RWPE1 (cell line): ENCODE measurements at regions of chr20 and their contacts with region 1.

Region 1: GRCh38 chr20:40962730-40963504 is 65.7 kb upstream of the TOP1 start:
- DNase-seq: peak; percentile 92
- H3K27ac ChIP-seq: no peak overlapping the region
- CTCF ChIP-seq: peak; percentile 98

Region 2: DNA sequence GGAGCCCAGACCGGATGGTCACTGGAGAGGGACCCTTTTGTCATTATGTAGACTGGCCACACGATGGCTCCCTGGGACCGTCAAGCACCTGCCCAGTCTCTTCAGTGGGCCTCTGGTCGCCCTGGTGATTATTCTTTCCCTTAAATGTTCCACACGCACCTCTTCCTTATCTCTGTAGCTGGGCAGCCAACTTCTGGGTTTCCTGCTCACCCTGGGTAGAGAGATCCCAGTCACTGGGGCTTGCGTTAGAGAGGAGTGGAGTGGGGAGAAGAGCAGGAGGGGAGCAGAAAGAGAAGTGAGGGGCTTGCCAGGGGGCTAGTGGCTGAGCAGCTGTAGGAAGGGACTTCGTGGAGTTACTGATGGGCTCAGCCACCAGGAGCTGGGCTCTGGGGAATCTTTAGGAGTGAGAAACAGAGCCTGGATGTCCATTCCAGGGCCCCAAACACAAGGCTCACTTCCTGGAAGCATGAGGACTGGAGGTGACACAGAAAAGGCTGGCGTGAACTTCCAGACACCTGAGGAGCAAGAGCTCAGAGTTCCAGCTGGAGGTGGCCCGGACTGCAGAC is 1850.7 kb before region 1 on chr20:
- CTCF ChIA-PET with region 1: interaction called, 18 read pairs
- POLR2A ChIA-PET with region 1: no interaction called
- DNase-seq: peak; percentile 93
- H3K27ac ChIP-seq: no peak overlapping the region
- CTCF ChIP-seq: peak; percentile 83

Region 3: DNA sequence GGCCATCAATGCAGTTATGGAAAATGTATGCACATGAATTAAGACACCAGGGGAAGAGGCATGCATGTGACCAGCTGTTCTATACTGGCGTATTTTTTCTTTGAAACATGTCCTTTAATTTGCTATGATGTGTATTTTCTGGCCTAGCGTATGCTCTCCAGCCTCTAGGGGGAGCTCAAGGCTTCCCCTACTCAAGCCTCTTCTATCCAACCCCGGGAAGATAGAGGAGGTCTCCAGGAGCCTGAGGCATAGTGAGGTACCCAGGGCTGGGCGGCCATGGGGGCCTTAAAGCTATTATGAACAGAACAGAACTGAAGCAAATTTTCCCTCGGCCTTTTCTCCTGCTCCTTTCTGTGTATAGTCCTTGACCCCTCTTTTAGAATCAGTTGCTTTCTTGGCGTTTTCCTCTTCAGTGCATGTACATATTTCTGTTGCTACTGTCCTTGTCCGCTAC is 802.8 kb before region 1 on chr20:
- CTCF ChIA-PET with region 1: interaction called, 17 read pairs
- POLR2A ChIA-PET with region 1: no interaction called
- DNase-seq: peak; percentile 72
- H3K27ac ChIP-seq: no peak overlapping the region
- CTCF ChIP-seq: peak; percentile 95

Region 4: GRCh38 chr20:40689943-40690835 is 272.7 kb before region 1 on chr20:
- CTCF ChIA-PET with region 1: interaction called, 15 read pairs
- POLR2A ChIA-PET with region 1: no interaction called
- DNase-seq: peak; percentile 92
- H3K27ac ChIP-seq: peak overlapping the region; percentile 97
- CTCF ChIP-seq: peak; percentile 99

Region 5: DNA sequence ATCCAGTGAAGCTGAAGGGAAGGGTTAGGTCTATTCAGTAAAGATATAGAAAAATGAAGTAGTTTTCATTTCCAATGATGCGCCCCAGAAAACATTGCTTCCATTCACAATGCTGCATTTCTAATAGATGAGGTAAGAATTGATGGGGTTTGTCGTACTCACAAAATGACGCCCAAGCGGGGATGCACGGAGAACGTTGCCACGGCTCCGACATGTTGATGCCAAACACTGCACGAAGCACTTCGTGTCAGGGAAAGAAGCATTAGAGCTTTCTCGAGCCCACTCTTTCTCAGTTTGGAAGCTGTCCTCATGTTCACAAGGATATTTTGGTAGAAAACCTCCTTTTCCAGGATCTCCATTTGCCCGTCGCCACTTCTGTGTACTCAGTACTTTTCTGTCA is 252.3 kb before region 1 on chr20:
- CTCF ChIA-PET with region 1: interaction called, 10 read pairs
- POLR2A ChIA-PET with region 1: no interaction called
- DNase-seq: no peak
- H3K27ac ChIP-seq: no peak overlapping the region
- CTCF ChIP-seq: no peak

Region 6: GRCh38 chr20:40741507-40742106 is 221.3 kb before region 1 on chr20:
- CTCF ChIA-PET with region 1: interaction called, 28 read pairs
- POLR2A ChIA-PET with region 1: no interaction called
- DNase-seq: peak; percentile 67
- H3K27ac ChIP-seq: no peak overlapping the region
- CTCF ChIP-seq: no peak

Region 7: DNA sequence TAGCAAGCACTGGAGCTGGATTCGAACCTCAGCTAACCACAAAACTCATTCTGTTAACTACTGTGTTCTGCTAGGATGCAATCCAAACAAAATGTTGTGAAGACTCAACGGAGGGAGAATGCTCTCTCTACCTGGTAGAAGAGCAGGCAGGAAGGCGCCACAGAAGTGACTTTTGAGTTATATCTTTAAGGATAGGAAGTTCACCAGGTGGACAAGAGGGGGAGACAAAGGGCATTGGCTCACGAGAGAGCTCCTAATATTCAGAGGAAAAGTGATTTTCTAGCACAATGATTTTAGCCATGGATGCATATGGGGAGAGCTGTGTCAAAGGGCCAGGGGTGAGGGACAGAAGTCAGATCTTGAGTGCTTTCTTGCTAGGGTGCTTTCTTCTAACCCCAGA is 165.5 kb before region 1 on chr20:
- CTCF ChIA-PET with region 1: interaction called, 18 read pairs
- POLR2A ChIA-PET with region 1: no interaction called
- DNase-seq: peak; percentile 60
- H3K27ac ChIP-seq: no peak overlapping the region
- CTCF ChIP-seq: peak; percentile 51

Region 8: GRCh38 chr20:40838509-40838908 is 124.4 kb before region 1 on chr20:
- CTCF ChIA-PET with region 1: no interaction called
- POLR2A ChIA-PET with region 1: no interaction called
- DNase-seq: no peak
- H3K27ac ChIP-seq: no peak overlapping the region
- CTCF ChIP-seq: no peak

Region 9: DNA sequence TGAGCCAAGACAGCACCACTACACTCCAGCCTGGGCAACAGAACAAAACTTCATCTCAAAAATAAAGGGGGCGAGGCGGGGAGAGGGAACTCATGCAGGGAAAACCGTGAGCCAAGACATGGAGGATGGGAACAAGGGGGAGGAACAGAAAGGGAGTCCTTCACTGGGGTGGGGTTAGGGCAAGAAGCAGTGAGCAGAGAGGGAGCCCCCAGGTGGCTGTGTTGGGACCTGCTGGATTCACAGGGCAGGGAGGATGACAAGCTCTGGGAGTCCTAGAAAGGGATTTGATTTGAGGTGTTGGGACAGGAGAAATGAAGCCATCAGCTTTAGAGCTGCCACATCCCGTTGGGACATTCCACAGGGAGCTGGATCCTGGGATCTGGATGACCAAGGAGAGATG is 24.9 kb before region 1 on chr20:
- CTCF ChIA-PET with region 1: no interaction called
- POLR2A ChIA-PET with region 1: no interaction called
- DNase-seq: no peak
- H3K27ac ChIP-seq: no peak overlapping the region
- CTCF ChIP-seq: no peak